HEK293 (cell line): ENCODE measurements at regions of chr4 and their contacts with region 1.

Region 1: DNA sequence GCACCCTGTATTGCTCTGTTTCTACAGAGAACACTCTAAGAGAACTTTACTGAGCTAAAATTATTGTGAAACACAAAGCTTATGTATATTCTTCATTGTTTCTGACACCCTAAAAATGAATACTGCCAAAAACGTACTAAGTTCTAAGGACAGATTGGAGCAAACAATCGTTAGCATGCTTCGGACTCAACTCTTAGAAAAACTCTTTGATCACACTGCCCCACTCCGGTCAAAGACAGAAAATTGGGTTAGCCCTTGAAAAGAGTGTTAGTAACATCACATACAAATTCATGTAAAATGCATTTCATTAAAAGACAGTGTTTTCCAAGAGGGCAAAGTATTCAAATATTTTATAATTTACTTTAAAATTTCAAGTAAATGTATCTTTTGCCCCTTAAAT is 177.4 kb downstream of the DCHS2 start:
- H3K4me3 ChIP-seq: no peak overlapping the region
- H3K27ac ChIP-seq: no peak overlapping the region
- H3K4me1 ChIP-seq: no peaks in the 10 kb centered on the region
- CTCF ChIP-seq: no peak

Region 2: DNA sequence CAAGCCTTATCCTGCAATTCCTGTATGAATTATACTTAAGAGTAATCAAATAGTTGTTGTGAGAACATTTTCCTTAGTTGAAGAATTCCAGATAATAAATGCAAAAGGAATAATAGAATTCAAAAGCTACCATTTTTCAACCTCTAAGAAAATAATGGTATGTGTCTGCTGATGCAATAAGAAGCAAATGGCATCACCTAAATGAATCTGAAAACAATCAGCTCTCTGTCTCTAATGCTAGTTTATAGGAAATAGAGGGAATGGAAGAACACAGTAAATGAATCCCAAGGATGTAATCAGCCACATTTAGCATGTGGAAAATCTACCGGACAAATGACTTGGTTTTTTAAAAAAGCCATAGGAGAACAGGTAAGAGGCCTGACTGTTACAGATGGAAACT is 62.2 kb after region 1 on chr4:
- CTCF ChIA-PET with region 1: interaction called, 11 read pairs
- POLR2A ChIA-PET with region 1: no interaction called
- H3K4me3 ChIP-seq: no peak overlapping the region
- H3K27ac ChIP-seq: no peak overlapping the region
- H3K4me1 ChIP-seq: no peaks in the 10 kb centered on the region
- CTCF ChIP-seq: no peak